ENCODE measurements at regions of chr14 and their contacts with region 1.

Region 1: GRCh38 chr14:61452452-61452851 is 131.1 kb downstream of the PRKCH start:
- DNase-seq: no peak
- H3K4me3 ChIP-seq: no peak overlapping the region
- CTCF ChIP-seq: no peak

Region 2: GRCh38 chr14:61832783-61833182 is 380.3 kb after region 1 on chr14:
- in situ Hi-C with region 1: loop called (anchors 5 kb)
- DNase-seq: no peak
- H3K4me3 ChIP-seq: no peak overlapping the region
- CTCF ChIP-seq: no peak